Activated CD4-positive, alpha-beta T cell treated with anti-CD3 and anti-CD28 coated beads for 36 hours (primary cell): ENCODE measurements at regions of chr22 and their contacts with region 1.

Region 1: GRCh38 chr22:30005213-30005857 is 74.9 kb upstream of the HORMAD2 start:
- DNase-seq: peak; percentile 80
- ATAC-seq: peak; percentile 86
- H3K4me3 Mint-ChIP-seq: no peak overlapping the region
- H3K27ac Mint-ChIP-seq: no peak overlapping the region
- H3K4me1 Mint-ChIP-seq: peaks cover 5% of the 10 kb centered on the region
- H3K27me3 Mint-ChIP-seq: no peaks in the 10 kb centered on the region

Region 2: DNA sequence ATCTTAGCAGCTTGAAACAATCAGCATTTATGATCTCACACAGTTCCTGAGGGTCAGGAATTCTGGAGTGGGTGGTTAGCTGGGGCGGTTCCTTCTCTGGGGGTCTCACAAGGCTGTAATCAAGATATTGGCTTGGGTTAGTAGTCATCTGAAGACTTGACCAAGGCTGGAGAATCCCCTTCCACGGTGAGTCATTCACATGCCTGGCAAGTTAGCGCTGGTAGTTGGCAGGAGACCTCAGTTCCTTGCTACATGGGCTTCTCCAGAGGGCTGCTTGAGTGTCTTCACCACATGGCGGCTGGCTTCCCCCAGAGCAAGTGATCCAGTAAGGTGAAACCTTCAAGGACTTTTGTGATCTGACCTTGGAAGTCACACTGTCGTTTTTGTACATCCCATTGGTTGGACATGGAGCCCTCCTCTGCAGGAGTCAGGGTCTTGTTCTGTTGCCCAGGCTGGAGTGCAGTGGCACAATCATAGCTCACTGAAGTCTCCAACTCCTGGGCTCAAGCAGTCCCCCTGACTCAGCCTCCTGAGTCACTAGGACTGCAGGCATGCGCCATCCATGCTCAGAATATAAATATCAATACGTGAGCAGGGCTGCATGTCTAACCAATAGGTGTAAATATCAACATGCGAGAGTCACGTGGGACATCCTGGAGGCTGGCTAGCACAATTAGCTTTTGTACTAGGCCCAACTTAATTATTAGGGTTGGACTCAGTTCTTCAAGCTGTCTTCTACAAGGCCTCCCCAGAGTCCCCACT is 417.2 kb before region 1 on chr22:
- CTCF ChIA-PET with region 1: no interaction called
- POLR2A ChIA-PET with region 1: no interaction called
- intact Hi-C with region 1: loop called in 1 of 2 experiments (anchors 1 kb)
- DNase-seq: no peak
- ATAC-seq: no peak
- H3K4me3 Mint-ChIP-seq: no peak overlapping the region
- H3K27ac Mint-ChIP-seq: no peak overlapping the region
- H3K4me1 Mint-ChIP-seq: peaks cover 8% of the 10 kb centered on the region
- H3K27me3 Mint-ChIP-seq: no peaks in the 10 kb centered on the region

Region 3: GRCh38 chr22:29635734-29636357 is 369.5 kb before region 1 on chr22:
- CTCF ChIA-PET with region 1: interaction called, 11 read pairs
- POLR2A ChIA-PET with region 1: no interaction called
- intact Hi-C with region 1: loop called in 1 of 2 experiments (anchors 2 kb)
- DNase-seq: no peak
- ATAC-seq: no peak
- H3K4me3 Mint-ChIP-seq: no peak overlapping the region
- H3K27ac Mint-ChIP-seq: no peak overlapping the region
- H3K4me1 Mint-ChIP-seq: peaks cover 18% of the 10 kb centered on the region
- H3K27me3 Mint-ChIP-seq: no peaks in the 10 kb centered on the region

Region 4: DNA sequence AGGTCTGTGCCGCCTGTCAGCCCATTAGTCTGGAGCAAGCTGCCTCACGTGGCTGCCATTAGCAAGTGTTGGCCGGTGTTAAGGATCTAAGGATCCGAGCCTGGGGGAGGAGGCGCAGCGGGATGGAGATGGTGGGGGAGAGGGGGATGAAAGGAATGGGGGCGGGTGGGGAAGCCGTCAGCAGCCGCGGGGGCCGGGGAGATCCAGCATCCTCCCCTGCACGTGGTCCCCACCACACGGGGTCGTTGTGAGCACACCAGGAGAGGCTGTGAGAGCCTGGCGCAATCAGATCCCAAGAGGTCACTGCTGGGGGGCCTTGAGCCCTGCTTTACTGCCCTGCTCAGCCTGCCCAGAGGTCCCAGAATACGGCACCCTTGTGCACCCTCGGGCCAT is 278.2 kb before region 1 on chr22:
- CTCF ChIA-PET with region 1: no interaction called
- POLR2A ChIA-PET with region 1: no interaction called
- intact Hi-C with region 1: loop called in 1 of 2 experiments (anchors 10 kb)
- DNase-seq: peak; percentile 54
- ATAC-seq: peak; percentile 44
- H3K4me3 Mint-ChIP-seq: no peak overlapping the region
- H3K27ac Mint-ChIP-seq: no peak overlapping the region
- H3K4me1 Mint-ChIP-seq: no peaks in the 10 kb centered on the region
- H3K27me3 Mint-ChIP-seq: no peaks in the 10 kb centered on the region

Region 5: GRCh38 chr22:29837780-29838598 is 167.3 kb before region 1 on chr22 and contains the start of gene ASCC2:
- CTCF ChIA-PET with region 1: interaction called, 8 read pairs
- POLR2A ChIA-PET with region 1: no interaction called
- intact Hi-C with region 1: loop called (anchors 1 kb)
- DNase-seq: peak; percentile 100
- ATAC-seq: peak; percentile 99
- H3K4me3 Mint-ChIP-seq: peak within 1 kb of the TSS; percentile 99
- H3K27ac Mint-ChIP-seq: peak within 1 kb of the TSS; percentile 97
- H3K4me1 Mint-ChIP-seq: peaks cover 36% of the 10 kb centered on the region
- H3K27me3 Mint-ChIP-seq: no peaks in the 10 kb centered on the region
- total RNA-seq, gene ASCC2: 56.0 to 69.9 TPM

Region 6: DNA sequence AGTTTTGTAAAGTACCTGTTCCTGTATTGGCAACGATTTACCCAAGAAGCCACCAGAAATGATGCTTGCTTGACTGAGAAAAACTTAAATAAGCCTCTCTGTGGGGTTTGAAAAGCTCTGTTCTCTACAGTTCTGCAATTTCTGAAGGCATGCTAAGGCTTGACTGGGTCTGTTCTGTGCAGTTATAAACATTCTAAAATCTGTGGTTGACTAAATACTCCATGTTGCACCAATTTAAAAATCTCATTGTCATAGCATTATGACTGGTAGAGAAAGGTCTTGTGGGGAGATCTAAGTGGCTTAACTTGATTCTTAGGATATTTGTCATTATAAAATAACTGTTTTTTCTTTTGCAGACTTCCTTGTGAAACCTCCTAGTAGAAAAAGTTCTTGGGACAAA is 48.7 kb before region 1 on chr22:
- CTCF ChIA-PET with region 1: interaction called, 4 read pairs
- POLR2A ChIA-PET with region 1: no interaction called
- intact Hi-C with region 1: loop called in 1 of 2 experiments (anchors 5 kb)
- DNase-seq: no peak
- ATAC-seq: no peak
- H3K4me3 Mint-ChIP-seq: no peak overlapping the region
- H3K27ac Mint-ChIP-seq: no peak overlapping the region
- H3K4me1 Mint-ChIP-seq: peaks cover 22% of the 10 kb centered on the region
- H3K27me3 Mint-ChIP-seq: no peaks in the 10 kb centered on the region

Region 7: DNA sequence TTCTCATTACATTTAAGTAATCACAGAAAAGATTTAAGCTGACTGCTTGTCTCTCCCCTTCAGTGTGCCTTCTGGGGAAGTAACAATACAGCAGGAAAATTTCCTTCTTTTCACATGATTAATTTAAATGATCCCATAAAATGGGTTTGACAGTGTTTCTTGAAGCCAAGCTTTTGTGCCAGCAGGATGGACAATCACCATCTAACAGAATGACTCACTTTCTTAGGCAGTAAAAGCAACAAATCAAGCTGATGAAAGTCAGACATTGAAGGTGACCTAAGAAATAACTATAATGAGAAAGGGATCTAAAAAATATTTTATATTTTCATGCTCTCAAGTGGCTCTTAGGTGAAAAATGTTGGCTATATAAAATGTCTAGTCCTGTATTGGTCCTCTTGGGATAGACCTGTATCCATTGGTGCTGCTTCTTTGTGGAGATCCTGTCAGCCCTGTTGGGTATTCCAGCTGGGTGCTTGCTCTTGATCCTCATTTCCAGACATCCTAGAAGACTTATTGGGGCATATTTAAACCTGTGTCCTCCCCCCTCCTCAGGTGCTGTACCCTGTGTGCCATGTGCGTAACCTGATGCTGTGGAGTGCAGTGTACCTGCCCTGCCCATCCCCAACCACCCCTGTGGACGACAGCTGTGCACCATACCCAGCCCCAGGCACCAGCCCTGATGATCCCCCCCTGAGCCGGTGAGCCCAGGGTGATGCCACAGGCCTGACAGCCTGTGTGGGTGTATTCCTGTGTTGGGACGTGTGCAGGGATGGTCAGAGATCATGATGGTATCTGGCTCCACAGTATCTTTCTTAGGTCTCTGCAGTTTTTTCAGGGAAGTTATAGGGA is 12.3 kb after region 1 on chr22:
- CTCF ChIA-PET with region 1: interaction called, 14 read pairs
- POLR2A ChIA-PET with region 1: no interaction called
- intact Hi-C with region 1: no loop called
- DNase-seq: no peak
- ATAC-seq: no peak
- H3K4me3 Mint-ChIP-seq: no peak overlapping the region
- H3K27ac Mint-ChIP-seq: no peak overlapping the region
- H3K4me1 Mint-ChIP-seq: peaks cover under 1% of the 10 kb centered on the region
- H3K27me3 Mint-ChIP-seq: no peaks in the 10 kb centered on the region

Region 8: DNA sequence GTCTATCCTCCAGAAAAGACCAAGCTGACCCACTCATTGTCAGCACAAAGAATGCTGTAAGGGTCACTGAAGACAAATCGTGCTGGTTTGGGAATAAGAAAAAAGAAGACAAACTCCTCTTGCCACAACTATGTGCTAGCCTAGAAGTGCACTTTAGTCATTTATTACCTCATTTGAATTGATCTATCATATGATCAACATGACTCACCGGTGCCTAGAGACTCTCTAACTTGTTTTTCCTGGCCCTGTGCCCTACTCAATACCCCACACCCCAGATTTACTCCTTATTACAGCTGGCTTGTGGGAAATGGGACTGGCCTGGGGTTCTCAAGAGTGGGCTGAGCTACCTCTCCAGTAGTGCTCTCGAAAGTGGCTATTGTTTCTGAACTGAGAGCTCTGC is 39.0 kb after region 1 on chr22:
- CTCF ChIA-PET with region 1: no interaction called
- POLR2A ChIA-PET with region 1: no interaction called
- intact Hi-C with region 1: no loop called
- DNase-seq: peak; percentile 13
- ATAC-seq: peak; percentile 69
- H3K4me3 Mint-ChIP-seq: no peak overlapping the region
- H3K27ac Mint-ChIP-seq: no peak overlapping the region
- H3K4me1 Mint-ChIP-seq: peaks cover 11% of the 10 kb centered on the region
- H3K27me3 Mint-ChIP-seq: no peaks in the 10 kb centered on the region